Dendritic cell treated with granulocyte-macrophage colony-stimulating factor and Interleukin-4, amounts not matched to agents 40 ng/mL and 50 ng/mL, for 4 days (primary cell): ENCODE measurements at regions of chr5 and their contacts with region 1.

Region 1: DNA sequence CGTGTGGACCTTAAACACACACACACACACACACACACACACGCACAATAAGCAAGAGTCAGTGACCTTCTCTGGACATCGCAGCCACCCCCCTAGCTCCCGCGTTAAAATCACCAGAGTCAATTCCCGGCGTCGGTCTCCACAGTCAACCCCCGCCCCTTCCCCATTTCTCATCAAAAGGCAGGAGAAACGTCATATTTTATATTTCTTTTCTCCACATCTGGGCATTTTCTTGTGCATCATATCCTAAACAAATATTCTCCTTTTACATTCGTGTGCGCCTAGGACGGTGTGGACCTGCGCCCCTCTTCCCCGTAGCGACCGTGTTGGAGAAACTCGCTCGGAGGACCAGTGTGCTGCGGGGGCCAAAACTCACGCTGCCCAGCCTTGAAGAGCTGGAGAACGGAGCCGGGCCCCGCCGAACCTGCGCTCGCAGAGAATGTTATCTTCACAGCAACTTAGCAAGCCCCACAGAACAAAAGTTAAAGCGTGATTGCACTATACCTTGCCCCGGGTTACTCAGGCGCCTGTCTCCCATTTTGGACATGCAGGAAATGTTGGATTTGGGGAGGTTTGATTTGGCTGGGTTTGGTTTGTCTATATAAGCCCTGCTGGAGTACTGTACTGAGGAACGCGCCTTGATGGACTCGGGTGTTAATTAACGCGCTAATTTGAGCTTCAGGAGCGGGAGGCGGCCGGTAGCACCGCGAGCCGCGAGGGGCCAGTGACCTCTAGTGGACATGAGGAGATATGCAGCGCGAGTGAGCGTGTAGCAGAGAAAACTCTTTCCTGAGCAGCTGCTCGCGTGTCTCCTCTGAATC is 192.4 kb downstream of the MEF2C start:
- H3K4me3 Mint-ChIP-seq: peak overlapping the region; percentile 75
- H3K27ac Mint-ChIP-seq: no peak overlapping the region
- H3K4me1 Mint-ChIP-seq: peaks cover 27% of the 10 kb centered on the region
- H3K27me3 Mint-ChIP-seq: peaks cover 99% of the 10 kb centered on the region

Region 2: DNA sequence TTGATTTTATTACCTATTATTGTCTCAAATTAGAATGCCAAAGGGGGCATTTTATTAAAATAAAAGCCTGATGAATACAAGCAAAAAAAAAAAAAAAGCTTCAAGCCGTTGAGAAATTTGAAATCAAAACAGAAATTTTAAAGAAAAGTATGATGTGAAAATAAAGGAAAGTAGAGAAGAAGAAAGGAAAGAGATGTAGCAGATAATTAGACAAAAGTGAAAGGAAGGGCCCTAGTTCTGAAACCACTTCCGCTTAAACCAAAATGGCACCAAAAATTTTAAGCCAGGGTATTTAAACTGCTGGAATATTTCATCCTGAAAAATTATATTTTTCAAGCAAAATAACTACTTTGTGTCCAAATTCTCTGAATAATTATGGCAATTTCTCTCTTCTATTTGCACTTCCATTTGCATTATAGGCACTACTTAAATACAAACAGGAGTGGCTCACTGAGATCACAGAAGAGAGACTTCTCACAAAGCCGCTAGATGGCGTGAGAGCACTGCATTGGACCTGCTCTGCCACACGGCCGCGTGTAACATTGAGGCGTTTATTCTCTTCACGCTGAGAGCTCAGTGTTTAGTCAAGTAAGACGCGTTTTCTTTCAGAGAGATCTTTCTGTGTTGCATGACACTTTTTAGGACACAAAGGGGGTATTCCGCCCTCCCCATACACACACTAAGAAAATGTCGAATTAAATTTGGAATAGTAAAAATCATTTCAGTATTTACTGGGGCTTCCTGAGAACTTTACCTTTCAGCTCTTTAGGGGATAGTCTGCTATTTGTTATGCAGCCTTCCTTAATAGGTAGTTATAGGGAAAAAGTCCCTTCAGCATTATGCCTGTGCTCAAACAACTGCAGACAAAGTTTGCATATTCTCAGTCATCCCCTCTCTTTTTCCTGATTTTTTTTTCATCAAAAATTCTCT is 909.5 kb before region 1 on chr5:
- intact Hi-C with region 1: loop called (anchors 1 kb)
- H3K4me3 Mint-ChIP-seq: no peak overlapping the region
- H3K27ac Mint-ChIP-seq: no peak overlapping the region
- H3K4me1 Mint-ChIP-seq: no peaks in the 10 kb centered on the region
- H3K27me3 Mint-ChIP-seq: peaks cover 21% of the 10 kb centered on the region